Tibial artery (tissue), 4 donors: ENCODE measurements at regions of chr3 and their contacts with region 1.

Region 1: DNA sequence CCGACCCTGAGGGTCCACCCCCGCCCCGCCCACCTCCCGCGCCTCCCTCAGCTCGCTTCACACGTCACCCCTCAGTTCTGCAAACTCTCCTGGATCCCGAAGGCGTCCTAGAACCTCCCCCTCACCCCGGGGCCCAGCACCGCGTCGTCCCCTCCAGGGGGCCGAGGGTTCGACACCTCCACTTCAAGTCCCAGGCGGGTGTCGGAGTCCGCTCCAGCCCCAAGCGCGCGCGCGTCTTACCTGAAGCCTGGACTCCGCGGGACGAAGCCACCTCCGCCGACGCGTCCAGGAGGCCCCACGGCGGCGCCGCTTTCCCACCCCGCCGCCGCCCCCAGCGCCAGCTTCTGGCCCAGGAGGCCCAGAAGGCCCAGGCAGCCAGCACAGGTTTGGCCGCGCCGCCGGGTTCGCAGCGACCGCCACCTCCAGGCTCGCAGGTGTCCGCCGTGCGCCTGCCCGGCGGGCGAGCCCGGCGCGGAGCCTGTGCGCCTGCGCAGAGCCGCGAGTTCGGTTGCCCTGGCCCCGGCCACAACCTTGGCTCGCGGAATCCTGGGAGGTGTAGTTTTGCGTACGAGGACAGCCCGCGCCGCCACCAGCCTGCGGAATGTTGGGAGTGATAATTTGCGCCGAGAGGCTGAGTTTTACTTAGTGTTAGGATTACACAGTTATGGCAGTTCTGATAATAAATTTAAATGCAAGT is at the start of gene POMGNT2:
- DNase-seq: peak; percentile 90 to 93
- H3K4me3 ChIP-seq: peak within 1 kb of the TSS; percentile 80 to 89
- H3K27ac ChIP-seq: peak within 1 kb of the TSS; percentile 69 to 74
- H3K4me1 ChIP-seq: peaks cover 0 to 18% (median 6%) of the 10 kb centered on the region in 4 donors
- H3K27me3 ChIP-seq: no peaks in the 10 kb centered on the region
- CTCF ChIP-seq: no peak

Region 2: GRCh38 chr3:42698911-42699230 is 406.9 kb before region 1 on chr3:
- intact Hi-C with region 1: loop called (anchors 10 kb)
- DNase-seq: no peak
- H3K4me3 ChIP-seq: no peak overlapping the region
- H3K27ac ChIP-seq: no peak overlapping the region
- H3K4me1 ChIP-seq: peaks cover 0 to 16% (median 15%) of the 10 kb centered on the region in 4 donors
- H3K27me3 ChIP-seq: peaks cover 0 to 4% of the 10 kb centered on the region in 2 donors
- CTCF ChIP-seq: no peak

Region 3: GRCh38 chr3:42979044-42979972 is 126.4 kb before region 1 on chr3 and contains the start of gene GASK1A:
- intact Hi-C with region 1: loop called (anchors 5 kb)
- DNase-seq: peak; percentile 77 to 84
- H3K4me3 ChIP-seq: peak within 1 kb of the TSS; percentile 70 to 83
- H3K27ac ChIP-seq: peak within 1 kb of the TSS; percentile 72 to 78
- H3K4me1 ChIP-seq: peaks cover 0 to 41% (median 30%) of the 10 kb centered on the region in 4 donors
- H3K27me3 ChIP-seq: no peaks in the 10 kb centered on the region
- CTCF ChIP-seq: no peak